CD8-positive, alpha-beta T cell (primary cell): ENCODE measurements at regions of chr14 and their contacts with region 1.

Region 1: GRCh38 chr14:33792720-33793368 is 158.0 kb downstream of the EGLN3 start:
- DNase-seq: peak; percentile 10 to 69 (median 57)
- ATAC-seq: no peak
- H3K4me3 ChIP-seq: no peak overlapping the region
- H3K4me3 Mint-ChIP-seq: peak overlapping the region; percentile 50
- H3K27ac ChIP-seq: no peak overlapping the region
- H3K27ac Mint-ChIP-seq: no peak overlapping the region
- H3K4me1 ChIP-seq: no peaks in the 10 kb centered on the region
- H3K4me1 Mint-ChIP-seq: peaks cover 12% of the 10 kb centered on the region
- H3K27me3 ChIP-seq: no peaks in the 10 kb centered on the region
- H3K27me3 Mint-ChIP-seq: peaks cover 45% of the 10 kb centered on the region
- CTCF ChIP-seq: peak; percentile 81

Region 2: DNA sequence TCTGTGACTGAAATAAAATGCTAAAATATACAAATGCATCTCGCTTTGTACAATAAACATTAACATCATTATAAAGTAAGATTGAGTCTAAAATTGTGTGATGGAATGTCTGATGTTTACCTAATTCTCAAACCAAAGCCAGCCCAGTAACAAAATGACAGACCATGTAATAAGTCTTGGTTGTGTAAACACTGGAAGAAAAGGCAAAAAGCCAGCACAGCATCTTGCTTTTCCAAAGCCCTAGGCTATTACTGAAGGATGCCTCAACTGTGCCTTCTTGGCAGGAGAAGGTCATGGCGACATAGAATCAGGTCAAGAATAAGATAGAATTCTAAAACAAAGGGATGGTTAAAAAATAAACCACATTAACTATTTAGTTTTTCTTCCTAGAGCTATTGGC is 11.6 kb before region 1 on chr14:
- CTCF ChIA-PET with region 1: interaction called, 23 read pairs
- POLR2A ChIA-PET with region 1: no interaction called
- intact Hi-C with region 1: no loop called
- DNase-seq: no peak
- ATAC-seq: no peak
- H3K4me3 ChIP-seq: no peak overlapping the region
- H3K4me3 Mint-ChIP-seq: no peak overlapping the region
- H3K27ac ChIP-seq: no peak overlapping the region
- H3K27ac Mint-ChIP-seq: no peak overlapping the region
- H3K4me1 ChIP-seq: no peaks in the 10 kb centered on the region
- H3K4me1 Mint-ChIP-seq: no peaks in the 10 kb centered on the region
- H3K27me3 ChIP-seq: no peaks in the 10 kb centered on the region
- H3K27me3 Mint-ChIP-seq: peaks cover 5% of the 10 kb centered on the region
- CTCF ChIP-seq: no peak

Region 3: GRCh38 chr14:33805593-33805992 is 12.7 kb after region 1 on chr14:
- CTCF ChIA-PET with region 1: interaction called, 26 read pairs
- POLR2A ChIA-PET with region 1: no interaction called
- intact Hi-C with region 1: no loop called
- DNase-seq: no peak
- ATAC-seq: no peak
- H3K4me3 ChIP-seq: no peak overlapping the region
- H3K4me3 Mint-ChIP-seq: no peak overlapping the region
- H3K27ac ChIP-seq: no peak overlapping the region
- H3K27ac Mint-ChIP-seq: no peak overlapping the region
- H3K4me1 ChIP-seq: no peaks in the 10 kb centered on the region
- H3K4me1 Mint-ChIP-seq: peaks cover 3% of the 10 kb centered on the region
- H3K27me3 ChIP-seq: no peaks in the 10 kb centered on the region
- H3K27me3 Mint-ChIP-seq: peaks cover 16% of the 10 kb centered on the region
- CTCF ChIP-seq: no peak

Region 4: DNA sequence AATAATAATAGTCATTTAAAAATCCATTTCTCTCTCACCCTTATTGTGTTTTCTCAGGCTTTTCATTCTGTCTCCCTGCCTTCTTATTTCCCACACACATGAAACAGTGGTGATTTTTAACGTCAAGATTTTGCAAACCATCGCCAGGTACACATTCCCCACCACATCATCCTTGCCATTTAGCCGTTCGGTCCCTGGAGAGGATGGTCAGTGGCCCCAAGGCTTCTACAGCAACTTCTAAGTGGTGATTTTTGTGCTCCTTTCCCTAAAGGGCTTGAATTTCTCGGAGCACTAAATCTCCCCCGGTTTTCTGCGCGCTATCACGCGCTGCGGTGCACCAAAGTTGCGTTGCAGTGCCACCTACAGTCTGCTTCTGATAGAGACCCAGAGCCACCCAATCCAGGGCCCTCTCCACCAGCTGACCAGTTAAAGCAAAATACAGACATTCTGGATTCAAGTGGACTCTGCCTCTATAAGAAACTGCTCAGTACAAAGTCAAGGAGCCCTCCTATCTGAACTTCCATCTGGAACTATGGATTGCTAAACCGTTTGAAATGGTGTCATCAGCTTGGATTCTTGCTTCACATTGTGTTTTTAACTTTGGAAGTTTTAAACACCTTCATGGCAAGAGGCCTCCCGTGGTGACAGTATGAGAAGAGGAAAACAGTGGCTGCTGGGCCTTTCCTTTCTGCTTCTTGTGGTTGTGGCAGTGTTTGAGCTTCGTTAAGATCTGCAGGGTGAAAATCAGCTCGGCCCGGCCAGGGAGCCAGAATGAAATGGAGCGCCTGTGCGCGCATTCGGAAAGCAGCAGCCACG is 435.2 kb after region 1 on chr14:
- CTCF ChIA-PET with region 1: no interaction called
- POLR2A ChIA-PET with region 1: no interaction called
- intact Hi-C with region 1: loop called in 1 of 2 experiments (anchors 5 kb)
- DNase-seq: peak in 8 of 9 experiments; percentile 18 to 59 (median 43)
- ATAC-seq: no peak
- H3K4me3 ChIP-seq: no peak overlapping the region
- H3K4me3 Mint-ChIP-seq: no peak overlapping the region
- H3K27ac ChIP-seq: no peak overlapping the region
- H3K27ac Mint-ChIP-seq: no peak overlapping the region
- H3K4me1 ChIP-seq: no peaks in the 10 kb centered on the region
- H3K4me1 Mint-ChIP-seq: no peaks in the 10 kb centered on the region
- H3K27me3 ChIP-seq: no peaks in the 10 kb centered on the region
- H3K27me3 Mint-ChIP-seq: peaks cover 8% of the 10 kb centered on the region
- CTCF ChIP-seq: peak; percentile 44